Heart left ventricle (tissue), 16 donors: ENCODE measurements at regions of chr9 and their contacts with region 1.

Region 1: DNA sequence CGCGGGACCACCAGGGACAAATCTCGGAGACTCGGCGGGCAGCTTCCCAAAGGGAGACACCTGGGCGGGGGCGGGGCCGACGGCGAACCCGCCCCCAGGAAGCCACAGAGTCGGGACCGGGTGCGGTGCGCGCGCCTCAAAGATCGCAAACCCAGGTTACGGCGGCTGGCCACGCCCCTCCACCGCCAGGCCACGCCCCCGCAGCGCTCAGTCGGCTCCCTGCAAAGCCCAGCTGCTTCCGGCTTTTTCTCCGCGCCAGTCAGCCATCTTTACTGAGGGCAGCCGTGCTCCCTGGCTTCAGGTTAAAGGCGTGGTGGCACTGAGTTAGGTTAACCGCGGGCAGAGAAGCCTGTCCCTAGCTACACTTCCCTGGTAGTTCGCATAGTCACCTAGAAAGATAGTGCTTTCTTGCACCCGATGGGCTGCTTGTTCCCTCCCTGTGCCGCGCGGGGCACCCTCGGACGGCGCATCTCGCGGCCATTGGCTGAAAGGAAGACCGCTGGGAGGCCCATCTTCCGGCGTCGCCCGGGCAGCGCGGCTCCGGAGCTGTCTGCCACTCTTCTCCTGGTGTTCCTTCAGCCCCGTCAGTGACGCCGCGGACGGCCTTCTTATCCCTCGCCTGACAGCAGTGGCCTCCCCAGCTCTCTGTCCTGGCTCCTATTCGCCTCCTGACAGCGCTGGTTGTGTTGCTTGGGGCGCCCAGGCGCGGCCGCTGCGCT is at the start of gene TBC1D2:
- DNase-seq: peak; percentile 95 to 98 (median 95)
- ATAC-seq: peak; percentile 95 to 98 (median 98)
- H3K4me3 ChIP-seq: peak within 1 kb of the TSS; percentile 58 to 97 (median 76)
- H3K27ac ChIP-seq: peak within 1 kb of the TSS; percentile 82 to 98 (median 94)
- H3K4me1 ChIP-seq: peaks cover 0 to 49% (median 15%) of the 10 kb centered on the region in 12 donors
- H3K27me3 ChIP-seq: no peaks in the 10 kb centered on the region
- CTCF ChIP-seq: peak in 6 of 12 donors; percentile 2 to 42 (median 12)
- POLR2A ChIP-seq: no peak
- total RNA-seq, gene TBC1D2: 1.1 to 9.4 (median 2.2) TPM

Region 2: GRCh38 chr9:97703437-97704344 is 552.0 kb before region 1 on chr9:
- intact Hi-C with region 1: loop called in 1 of 10 experiments (anchors 10 kb)
- DNase-seq: no peak
- ATAC-seq: peak in 2 of 4 donors; percentile 39 to 60
- H3K4me3 ChIP-seq: no peak overlapping the region
- H3K27ac ChIP-seq: no peak overlapping the region
- H3K4me1 ChIP-seq: peaks cover 0 to 7% (median 0%) of the 10 kb centered on the region in 12 donors
- H3K27me3 ChIP-seq: peaks cover 0 to 21% (median 0%) of the 10 kb centered on the region in 9 donors
- CTCF ChIP-seq: no peak
- POLR2A ChIP-seq: no peak

Region 3: GRCh38 chr9:98056269-98057137 is 199.2 kb before region 1 on chr9 and contains the start of gene NANS:
- intact Hi-C with region 1: loop called in 1 of 10 experiments (anchors 5 kb)
- DNase-seq: peak; percentile 94 to 96 (median 95)
- ATAC-seq: peak; percentile 97 to 99 (median 99)
- H3K4me3 ChIP-seq: peak within 1 kb of the TSS; percentile 64 to 98 (median 80)
- H3K27ac ChIP-seq: peak within 1 kb of the TSS; percentile 79 to 97 (median 90)
- H3K4me1 ChIP-seq: peaks cover 0 to 32% (median 10%) of the 10 kb centered on the region in 12 donors
- H3K27me3 ChIP-seq: no peaks in the 10 kb centered on the region
- CTCF ChIP-seq: peak in 1 of 12 donors; percentile 9
- POLR2A ChIP-seq: peak; percentile 97 to 98
- total RNA-seq, gene NANS: 24.3 to 59.0 (median 33.7) TPM

Region 4: DNA sequence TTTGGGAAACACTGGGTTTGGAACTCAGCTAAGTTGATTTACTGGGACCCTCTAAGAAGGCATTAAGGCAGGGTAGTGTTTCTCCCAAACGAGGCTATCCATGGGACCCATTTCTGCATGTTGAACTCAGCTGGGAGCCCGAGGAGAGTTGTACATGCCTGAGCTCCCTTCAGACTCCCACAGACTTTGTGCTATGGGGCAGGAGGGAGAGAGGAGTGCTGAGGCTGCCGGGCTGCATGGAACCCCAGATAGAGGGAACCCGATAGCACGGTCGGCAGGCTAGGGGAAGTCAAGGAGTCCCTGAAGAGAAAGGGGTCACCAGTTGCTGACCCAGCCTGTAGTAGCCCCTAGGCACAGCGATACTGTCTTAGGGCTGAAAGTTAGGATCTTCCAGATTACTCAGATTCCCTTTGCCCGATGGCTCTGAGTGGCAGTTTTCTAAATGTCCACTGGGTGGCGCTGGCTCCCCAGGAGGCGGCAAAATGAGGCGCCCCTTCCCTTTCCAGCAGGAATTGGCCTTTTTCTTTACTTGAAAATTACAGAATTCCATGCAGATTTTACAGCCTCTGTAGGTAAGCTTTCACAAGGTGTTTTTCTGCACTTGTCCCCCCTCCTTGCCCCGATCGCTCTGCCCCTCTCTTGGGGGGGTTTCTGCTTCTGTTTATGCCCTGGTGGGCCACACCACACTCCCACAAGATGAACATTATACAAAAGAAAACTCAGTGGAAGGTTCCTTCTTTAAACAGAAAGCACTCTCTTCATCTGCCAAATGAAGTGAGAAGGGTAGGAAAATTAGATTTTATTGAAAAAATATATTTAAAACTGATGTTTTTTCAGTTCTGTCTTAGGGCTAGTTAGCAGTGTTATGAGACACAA is 181.4 kb before region 1 on chr9:
- intact Hi-C with region 1: loop called in 6 of 10 experiments (anchors 5 kb)
- DNase-seq: peak; percentile 41 to 70 (median 47)
- ATAC-seq: peak in 3 of 4 donors; percentile 33 to 62 (median 56)
- H3K4me3 ChIP-seq: no peak overlapping the region
- H3K27ac ChIP-seq: peak overlapping the region in 2 of 12 donors; percentile 23 to 37
- H3K4me1 ChIP-seq: peaks cover 0 to 21% (median 6%) of the 10 kb centered on the region in 12 donors
- H3K27me3 ChIP-seq: no peaks in the 10 kb centered on the region
- CTCF ChIP-seq: peak; percentile 81 to 98 (median 94)
- POLR2A ChIP-seq: no peak

Region 5: GRCh38 chr9:99266255-99267023 is 1010.7 kb after region 1 on chr9:
- intact Hi-C with region 1: no loop called
- DNase-seq: peak; percentile 63 to 79 (median 66)
- ATAC-seq: peak; percentile 55 to 88 (median 82)
- H3K4me3 ChIP-seq: no peak overlapping the region
- H3K27ac ChIP-seq: no peak overlapping the region
- H3K4me1 ChIP-seq: peaks cover 0 to 10% (median 2%) of the 10 kb centered on the region in 12 donors
- H3K27me3 ChIP-seq: no peaks in the 10 kb centered on the region
- CTCF ChIP-seq: peak; percentile 65 to 90 (median 78)
- POLR2A ChIP-seq: no peak